ENCODE measurements at regions of chr1 and their contacts with region 1.

Region 1: GRCh38 chr1:211965108-211965805 is 70.1 kb downstream of the INTS7 start:
- DNase-seq: no peak
- ATAC-seq: no peak

Region 2: GRCh38 chr1:210792245-210793102 is 1172.8 kb before region 1 on chr1:
- intact Hi-C with region 1: loop called (anchors 5 kb)
- DNase-seq: no peak
- ATAC-seq: no peak

Region 3: GRCh38 chr1:211985556-211986264 is 20.5 kb after region 1 on chr1:
- intact Hi-C with region 1: loop called (anchors 1 kb)
- DNase-seq: no peak
- ATAC-seq: no peak

Region 4: DNA sequence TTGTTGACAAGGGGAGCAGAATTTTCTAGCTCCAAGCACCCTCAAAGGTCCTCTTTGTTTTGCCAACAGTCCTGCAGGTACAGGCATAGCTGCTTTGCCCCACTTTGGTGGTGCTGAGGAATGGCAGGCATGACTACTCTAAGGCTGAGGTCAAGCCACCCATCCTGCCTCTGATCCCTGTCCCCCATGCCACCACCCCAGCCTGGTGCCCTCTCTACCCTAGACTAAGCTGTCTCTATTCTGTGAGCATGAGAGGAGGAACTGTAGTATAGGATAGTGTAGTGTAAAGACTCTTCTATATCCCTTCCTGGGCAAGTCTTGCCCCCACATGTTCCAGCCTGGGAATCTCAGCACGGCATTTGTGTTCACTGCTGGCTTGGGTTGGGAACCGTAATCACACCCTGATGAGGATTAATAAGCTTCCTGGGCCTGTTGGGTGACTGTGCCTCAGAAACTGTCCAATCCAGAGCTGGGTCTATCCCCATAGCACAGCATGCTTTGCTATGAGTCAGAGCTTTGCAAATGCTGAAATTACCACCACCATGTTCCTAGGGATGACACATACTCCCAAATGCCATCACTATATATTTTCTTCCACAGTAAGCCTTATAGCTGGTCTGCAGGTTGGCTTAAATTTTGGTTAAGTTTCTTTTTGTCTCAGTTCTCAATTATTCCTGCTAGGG is 214.3 kb after region 1 on chr1:
- intact Hi-C with region 1: no loop called
- DNase-seq: no peak
- ATAC-seq: no peak

Measured in sciatic nerve (tissue), 2 donors.